ENCODE measurements at regions of chr12 and their contacts with region 1.

Region 1: DNA sequence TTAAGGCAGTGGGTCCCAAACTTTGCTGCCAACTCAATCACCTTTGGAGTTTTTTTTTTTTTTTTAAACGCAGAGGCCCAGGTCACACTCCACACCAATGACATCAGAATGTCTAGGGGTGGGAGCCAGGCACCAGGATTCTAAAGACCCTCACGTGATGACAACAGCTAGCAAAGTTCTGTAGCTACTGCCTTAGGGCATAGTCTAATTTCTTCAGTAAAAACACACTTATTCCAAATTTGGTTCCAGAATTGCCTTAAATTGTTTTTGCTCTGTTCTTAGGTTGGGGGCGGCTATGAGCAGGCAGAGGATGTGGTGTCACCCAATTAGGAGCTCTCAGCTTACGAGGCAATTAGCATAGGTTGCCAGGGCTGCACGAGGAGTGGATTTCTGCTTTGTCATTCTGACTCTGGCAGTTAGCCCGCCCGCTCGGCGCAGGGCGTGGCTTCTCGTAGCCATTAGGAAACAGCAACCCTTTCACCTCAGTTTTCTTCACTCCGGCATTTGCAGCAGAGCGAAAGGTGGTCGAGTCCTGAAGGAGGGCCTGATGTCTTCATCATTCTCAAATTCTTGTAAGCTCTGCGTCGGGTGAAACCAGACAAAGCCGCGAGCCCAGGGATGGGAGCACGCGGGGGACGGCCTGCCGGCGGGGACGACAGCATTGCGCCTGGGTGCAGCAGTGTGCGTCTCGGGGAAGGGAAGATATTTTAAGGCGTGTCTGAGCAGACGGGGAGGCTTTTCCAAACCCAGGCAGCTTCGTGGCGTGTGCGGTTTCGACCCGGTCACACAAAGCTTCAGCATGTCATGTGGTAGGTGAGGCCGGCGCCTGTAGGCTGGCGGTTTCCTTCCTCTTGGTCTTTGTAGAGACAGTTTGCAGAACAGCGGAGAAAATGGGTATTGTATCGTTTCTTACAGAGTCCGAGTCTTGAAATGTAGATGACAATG is 16.7 kb upstream of the EID3 start:
- DNase-seq: peak; percentile 75 to 95 (median 88)
- ATAC-seq: peak; percentile 87
- H3K4me3 ChIP-seq: peak overlapping the region; percentile 80 to 86
- H3K4me3 Mint-ChIP-seq: peak overlapping the region; percentile 97
- H3K27ac ChIP-seq: peak overlapping the region; percentile 64 to 90
- H3K27ac Mint-ChIP-seq: peak overlapping the region; percentile 96
- H3K4me1 ChIP-seq: peaks cover 24% of the 10 kb centered on the region
- H3K4me1 Mint-ChIP-seq: peaks cover 35% of the 10 kb centered on the region
- H3K27me3 ChIP-seq: no peaks in the 10 kb centered on the region
- H3K27me3 Mint-ChIP-seq: no peaks in the 10 kb centered on the region
- CTCF ChIP-seq: no peak

Region 2: GRCh38 chr12:103840876-103841689 is 445.7 kb before region 1 on chr12 and contains the start of gene NT5DC3:
- CTCF ChIA-PET with region 1: no interaction called
- POLR2A ChIA-PET with region 1: no interaction called
- intact Hi-C with region 1: loop called (anchors 2 to 5 kb)
- DNase-seq: peak; percentile 66 to 91 (median 82)
- ATAC-seq: peak; percentile 93
- H3K4me3 ChIP-seq: peak within 1 kb of the TSS; percentile 64 to 68
- H3K4me3 Mint-ChIP-seq: peak within 1 kb of the TSS; percentile 85
- H3K27ac ChIP-seq: peak within 1 kb of the TSS; percentile 36 to 40
- H3K27ac Mint-ChIP-seq: peak within 1 kb of the TSS; percentile 74
- H3K4me1 ChIP-seq: peaks cover 11% of the 10 kb centered on the region
- H3K4me1 Mint-ChIP-seq: peaks cover 18% of the 10 kb centered on the region
- H3K27me3 ChIP-seq: no peaks in the 10 kb centered on the region
- H3K27me3 Mint-ChIP-seq: no peaks in the 10 kb centered on the region
- CTCF ChIP-seq: no peak
- total RNA-seq, gene NT5DC3: 4.3 to 5.6 TPM

Region 3: GRCh38 chr12:103901518-103902173 is 385.2 kb before region 1 on chr12:
- CTCF ChIA-PET with region 1: no interaction called
- POLR2A ChIA-PET with region 1: no interaction called
- intact Hi-C with region 1: no loop called
- DNase-seq: peak; percentile 22 to 81 (median 59)
- ATAC-seq: peak; percentile 96
- H3K4me3 ChIP-seq: peak overlapping the region; percentile 6 to 53
- H3K4me3 Mint-ChIP-seq: peak overlapping the region; percentile 76
- H3K27ac ChIP-seq: peak overlapping the region; percentile 28 to 54
- H3K27ac Mint-ChIP-seq: peak overlapping the region; percentile 94
- H3K4me1 ChIP-seq: peaks cover 56% of the 10 kb centered on the region
- H3K4me1 Mint-ChIP-seq: peaks cover 69% of the 10 kb centered on the region
- H3K27me3 ChIP-seq: no peaks in the 10 kb centered on the region
- H3K27me3 Mint-ChIP-seq: no peaks in the 10 kb centered on the region
- CTCF ChIP-seq: no peak

Region 4: DNA sequence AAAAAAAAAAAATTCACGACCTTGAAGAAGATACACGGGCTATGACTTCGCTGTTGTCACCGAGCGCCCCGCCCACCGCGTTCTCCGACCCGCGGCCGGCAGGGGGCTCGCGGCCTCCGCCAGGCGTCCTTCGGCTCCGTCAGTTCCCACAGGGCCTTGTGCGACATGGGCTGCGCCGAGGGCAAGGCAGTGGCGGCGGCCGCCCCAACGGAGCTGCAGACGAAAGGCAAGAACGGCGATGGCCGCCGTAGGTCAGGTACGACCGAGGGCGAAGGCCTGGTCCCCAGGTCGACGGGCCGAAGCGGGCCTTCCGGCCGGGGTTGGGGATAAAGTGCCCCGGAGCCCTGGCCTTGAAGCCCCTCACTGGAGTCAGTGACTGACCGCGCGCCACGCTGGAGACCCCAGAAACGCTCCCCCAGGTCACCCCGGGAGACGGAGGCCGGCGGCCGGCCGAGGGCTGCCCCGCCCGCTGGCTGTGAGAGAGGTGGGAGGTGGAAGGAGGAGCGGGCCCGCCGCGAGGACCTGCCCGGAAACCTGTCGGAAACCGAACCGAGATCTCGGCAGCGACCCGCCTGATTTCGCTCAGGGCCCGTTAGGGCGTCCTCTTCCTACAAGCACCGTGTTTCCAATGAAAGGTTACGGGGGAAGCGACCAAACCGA is 71.0 kb before region 1 on chr12 and contains the start of gene TXNRD1:
- CTCF ChIA-PET with region 1: interaction called, 7 read pairs
- POLR2A ChIA-PET with region 1: interaction called, 3 read pairs
- intact Hi-C with region 1: loop called (anchors 1 to 5 kb)
- DNase-seq: peak; percentile 67 to 91 (median 83)
- ATAC-seq: peak; percentile 97
- H3K4me3 ChIP-seq: peak within 1 kb of the TSS; percentile 63 to 69
- H3K4me3 Mint-ChIP-seq: peak within 1 kb of the TSS; percentile 83
- H3K27ac ChIP-seq: peak within 1 kb of the TSS in 1 of 2 experiments; percentile 26
- H3K27ac Mint-ChIP-seq: peak within 1 kb of the TSS; percentile 64
- H3K4me1 ChIP-seq: peaks cover 9% of the 10 kb centered on the region
- H3K4me1 Mint-ChIP-seq: peaks cover 18% of the 10 kb centered on the region
- H3K27me3 ChIP-seq: no peaks in the 10 kb centered on the region
- H3K27me3 Mint-ChIP-seq: peaks cover 3% of the 10 kb centered on the region
- CTCF ChIP-seq: peak; percentile 80
- total RNA-seq, gene TXNRD1: 25.1 to 33.1 TPM

Region 5: GRCh38 chr12:104303538-104304151 is 16.8 kb after region 1 on chr12 and contains the start of gene EID3:
- CTCF ChIA-PET with region 1: interaction called, 12 read pairs
- POLR2A ChIA-PET with region 1: interaction called, 43 read pairs
- intact Hi-C with region 1: loop called (anchors 1 kb)
- DNase-seq: peak; percentile 78 to 92 (median 91)
- ATAC-seq: peak; percentile 96
- H3K4me3 ChIP-seq: peak within 1 kb of the TSS; percentile 63 to 74
- H3K4me3 Mint-ChIP-seq: peak within 1 kb of the TSS; percentile 95
- H3K27ac ChIP-seq: peak within 1 kb of the TSS; percentile 60 to 80
- H3K27ac Mint-ChIP-seq: peak within 1 kb of the TSS; percentile 98
- H3K4me1 ChIP-seq: peaks cover 27% of the 10 kb centered on the region
- H3K4me1 Mint-ChIP-seq: peaks cover 62% of the 10 kb centered on the region
- H3K27me3 ChIP-seq: no peaks in the 10 kb centered on the region
- H3K27me3 Mint-ChIP-seq: no peaks in the 10 kb centered on the region
- CTCF ChIP-seq: no peak
- total RNA-seq, gene EID3: 11.7 to 13.0 TPM

Region 6: GRCh38 chr12:104958009-104958945 is 671.5 kb after region 1 on chr12 and contains the start of gene SLC41A2:
- CTCF ChIA-PET with region 1: no interaction called
- POLR2A ChIA-PET with region 1: no interaction called
- intact Hi-C with region 1: loop called in 1 of 2 experiments (anchors 5 kb)
- DNase-seq: peak; percentile 52 to 90 (median 76)
- ATAC-seq: peak; percentile 90
- H3K4me3 ChIP-seq: peak within 1 kb of the TSS; percentile 61 to 97
- H3K4me3 Mint-ChIP-seq: peak within 1 kb of the TSS; percentile 94
- H3K27ac ChIP-seq: peak within 1 kb of the TSS; percentile 40 to 42
- H3K27ac Mint-ChIP-seq: peak within 1 kb of the TSS; percentile 85
- H3K4me1 ChIP-seq: peaks cover 13% of the 10 kb centered on the region
- H3K4me1 Mint-ChIP-seq: peaks cover 19% of the 10 kb centered on the region
- H3K27me3 ChIP-seq: no peaks in the 10 kb centered on the region
- H3K27me3 Mint-ChIP-seq: peaks cover 17% of the 10 kb centered on the region
- CTCF ChIP-seq: no peak
- total RNA-seq, gene SLC41A2: 3.4 to 4.2 TPM

Region 7: GRCh38 chr12:105330283-105330930 is 1043.6 kb after region 1 on chr12 and contains the start of gene C12orf75:
- CTCF ChIA-PET with region 1: no interaction called
- POLR2A ChIA-PET with region 1: no interaction called
- intact Hi-C with region 1: loop called in 1 of 2 experiments (anchors 10 kb)
- DNase-seq: peak; percentile 52 to 93 (median 85)
- ATAC-seq: peak; percentile 80
- H3K4me3 ChIP-seq: peak within 1 kb of the TSS; percentile 62 to 70
- H3K4me3 Mint-ChIP-seq: peak within 1 kb of the TSS; percentile 90
- H3K27ac ChIP-seq: peak within 1 kb of the TSS; percentile 48 to 74
- H3K27ac Mint-ChIP-seq: peak within 1 kb of the TSS; percentile 87
- H3K4me1 ChIP-seq: peaks cover 26% of the 10 kb centered on the region
- H3K4me1 Mint-ChIP-seq: peaks cover 60% of the 10 kb centered on the region
- H3K27me3 ChIP-seq: no peaks in the 10 kb centered on the region
- H3K27me3 Mint-ChIP-seq: no peaks in the 10 kb centered on the region
- CTCF ChIP-seq: no peak
- total RNA-seq, gene C12orf75: 27.5 to 27.9 TPM